ENCODE measurements at regions of chr3 and their contacts with region 1.

Region 1: GRCh38 chr3:117719316-117719926 is 1009.8 kb downstream of the TUSC7 start:
- DNase-seq: peak; percentile 12
- ATAC-seq: no peak
- H3K4me3 ChIP-seq: no peak overlapping the region
- H3K4me3 Mint-ChIP-seq: no peak overlapping the region
- H3K27ac ChIP-seq: no peak overlapping the region
- H3K27ac Mint-ChIP-seq: no peak overlapping the region
- H3K4me1 ChIP-seq: peaks cover 0 to 2% of the 10 kb centered on the region in 2 donors
- H3K4me1 Mint-ChIP-seq: peaks cover 8% of the 10 kb centered on the region
- H3K27me3 ChIP-seq: no peaks in the 10 kb centered on the region
- H3K27me3 Mint-ChIP-seq: no peaks in the 10 kb centered on the region
- CTCF ChIP-seq: peak; percentile 75

Region 2: DNA sequence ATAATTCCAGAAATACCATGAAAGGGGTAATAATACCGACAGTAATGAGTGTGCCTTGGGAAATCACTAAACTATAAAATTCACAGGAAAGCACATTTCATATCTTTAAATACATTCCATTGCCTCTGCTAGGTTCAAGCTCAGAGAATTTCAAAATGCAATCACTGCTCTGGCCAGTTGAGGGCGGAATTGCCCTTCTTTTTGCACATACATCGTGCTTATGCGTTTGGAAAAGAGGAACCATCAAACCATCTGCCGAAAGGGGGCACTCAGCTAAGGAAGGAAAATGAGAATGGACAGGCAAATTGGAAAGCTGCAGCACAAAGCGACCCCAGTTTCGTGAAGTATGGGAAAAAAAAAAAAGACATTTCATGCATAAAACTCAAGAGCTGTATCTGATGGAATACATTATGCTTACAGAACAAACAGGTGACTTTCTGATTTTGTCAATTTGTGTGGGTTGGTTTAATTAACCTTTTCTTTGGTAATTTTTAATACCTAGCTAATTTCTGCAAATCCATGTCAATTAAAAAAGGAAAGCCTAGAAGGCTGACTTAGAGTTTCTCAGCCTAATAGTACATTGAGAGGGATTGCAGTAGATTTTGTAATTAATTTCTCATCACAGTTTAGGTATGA is 948.5 kb before region 1 on chr3:
- CTCF ChIA-PET with region 1: no interaction called
- POLR2A ChIA-PET with region 1: no interaction called
- intact Hi-C with region 1: loop called (anchors 2 kb)
- DNase-seq: peak; percentile 70
- ATAC-seq: peak; percentile 54
- H3K4me3 ChIP-seq: no peak overlapping the region
- H3K4me3 Mint-ChIP-seq: no peak overlapping the region
- H3K27ac ChIP-seq: no peak overlapping the region
- H3K27ac Mint-ChIP-seq: no peak overlapping the region
- H3K4me1 ChIP-seq: no peaks in the 10 kb centered on the region
- H3K4me1 Mint-ChIP-seq: peaks cover 2% of the 10 kb centered on the region
- H3K27me3 ChIP-seq: peaks cover 0 to 3% (median 0%) of the 10 kb centered on the region in 4 experiments
- H3K27me3 Mint-ChIP-seq: peaks cover 4% of the 10 kb centered on the region
- CTCF ChIP-seq: peak; percentile 91

Region 3: GRCh38 chr3:116863822-116864589 is 855.4 kb before region 1 on chr3:
- CTCF ChIA-PET with region 1: no interaction called
- POLR2A ChIA-PET with region 1: no interaction called
- intact Hi-C with region 1: loop called (anchors 5 kb)
- DNase-seq: peak; percentile 58
- ATAC-seq: no peak
- H3K4me3 ChIP-seq: peak overlapping the region in 3 of 5 experiments; percentile 18 to 43 (median 32)
- H3K4me3 Mint-ChIP-seq: no peak overlapping the region
- H3K27ac ChIP-seq: no peak overlapping the region
- H3K27ac Mint-ChIP-seq: no peak overlapping the region
- H3K4me1 ChIP-seq: peaks cover 5 to 10% of the 10 kb centered on the region in 2 donors
- H3K4me1 Mint-ChIP-seq: no peaks in the 10 kb centered on the region
- H3K27me3 ChIP-seq: no peaks in the 10 kb centered on the region
- H3K27me3 Mint-ChIP-seq: no peaks in the 10 kb centered on the region
- CTCF ChIP-seq: peak; percentile 65

Region 4: GRCh38 chr3:117019082-117019713 is 700.2 kb before region 1 on chr3:
- CTCF ChIA-PET with region 1: interaction called, 3 read pairs
- POLR2A ChIA-PET with region 1: no interaction called
- intact Hi-C with region 1: loop called (anchors 2 kb)
- DNase-seq: peak; percentile 53
- ATAC-seq: peak; percentile 33
- H3K4me3 ChIP-seq: no peak overlapping the region
- H3K4me3 Mint-ChIP-seq: no peak overlapping the region
- H3K27ac ChIP-seq: no peak overlapping the region
- H3K27ac Mint-ChIP-seq: no peak overlapping the region
- H3K4me1 ChIP-seq: peaks cover 2 to 5% of the 10 kb centered on the region in 2 donors
- H3K4me1 Mint-ChIP-seq: peaks cover 8% of the 10 kb centered on the region
- H3K27me3 ChIP-seq: peaks cover 0 to 6% (median 2%) of the 10 kb centered on the region in 4 experiments
- H3K27me3 Mint-ChIP-seq: no peaks in the 10 kb centered on the region
- CTCF ChIP-seq: peak; percentile 69

Measured in B cell (primary cell).